ENCODE measurements at regions of chr18 and their contacts with region 1.

Region 1: DNA sequence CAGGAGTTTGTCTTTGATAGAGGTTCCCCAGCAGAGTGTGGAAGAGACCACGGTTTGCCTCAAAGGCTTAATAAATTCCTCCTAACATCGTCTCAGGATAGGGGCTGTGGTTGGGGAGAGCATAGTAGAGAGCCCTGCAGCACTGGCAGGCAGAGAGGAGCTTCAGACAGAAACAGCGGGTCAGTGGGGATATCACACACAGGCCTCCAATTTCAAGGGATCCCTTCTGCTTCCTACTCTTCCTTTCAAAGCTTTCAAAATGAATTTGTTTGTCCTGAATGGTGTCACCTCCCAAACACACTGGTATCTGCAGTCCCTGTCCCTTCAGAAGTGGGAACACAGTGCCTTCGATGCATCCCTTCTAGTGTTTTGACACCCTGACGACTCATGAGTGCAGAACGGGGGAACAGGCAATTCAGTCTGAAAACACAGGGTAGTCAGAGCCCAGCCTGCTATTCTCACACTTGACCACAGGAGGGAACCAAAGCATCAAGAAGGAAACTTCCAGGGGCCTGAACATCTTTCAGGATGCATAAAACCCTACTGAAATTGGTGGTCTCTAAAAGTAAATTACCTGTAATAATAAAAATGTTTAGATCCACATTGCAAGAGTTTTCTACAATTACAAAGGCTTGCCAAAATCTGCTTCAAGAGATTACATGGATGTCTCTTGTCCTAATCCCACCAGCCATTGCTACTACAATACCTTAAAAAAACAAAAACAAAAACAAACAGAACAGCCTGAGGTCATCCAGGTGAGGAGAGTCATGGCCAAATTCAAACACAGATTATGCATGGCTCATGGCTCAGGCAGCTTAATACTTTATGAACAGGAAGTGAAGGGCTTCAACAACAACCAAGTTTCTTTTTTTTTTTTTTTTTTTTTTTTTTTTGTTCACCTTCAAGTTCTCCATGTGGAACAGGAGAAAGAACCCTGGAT is 49.8 kb downstream of the SLC14A2 start:
- DNase-seq: peak in 1 of 2 donors; percentile 64
- ATAC-seq: peak; percentile 82
- H3K4me3 ChIP-seq: no peak overlapping the region
- H3K27ac ChIP-seq: no peak overlapping the region
- H3K4me1 ChIP-seq: no peaks in the 10 kb centered on the region
- H3K27me3 ChIP-seq: no peaks in the 10 kb centered on the region

Region 2: GRCh38 chr18:45621061-45621511 is 44.0 kb before region 1 on chr18:
- intact Hi-C with region 1: loop called (anchors 5 kb)
- DNase-seq: no peak
- ATAC-seq: no peak
- H3K4me3 ChIP-seq: no peak overlapping the region
- H3K27ac ChIP-seq: no peak overlapping the region
- H3K4me1 ChIP-seq: peaks cover 5 to 7% of the 10 kb centered on the region in 2 donors
- H3K27me3 ChIP-seq: no peaks in the 10 kb centered on the region

Region 3: GRCh38 chr18:45637546-45638327 is 27.4 kb before region 1 on chr18:
- intact Hi-C with region 1: loop called in 1 of 2 experiments (anchors 2 kb)
- DNase-seq: no peak
- ATAC-seq: peak; percentile 83
- H3K4me3 ChIP-seq: no peak overlapping the region
- H3K27ac ChIP-seq: peak overlapping the region; percentile 72 to 91
- H3K4me1 ChIP-seq: peaks cover 3 to 11% of the 10 kb centered on the region in 2 donors
- H3K27me3 ChIP-seq: no peaks in the 10 kb centered on the region

Region 4: DNA sequence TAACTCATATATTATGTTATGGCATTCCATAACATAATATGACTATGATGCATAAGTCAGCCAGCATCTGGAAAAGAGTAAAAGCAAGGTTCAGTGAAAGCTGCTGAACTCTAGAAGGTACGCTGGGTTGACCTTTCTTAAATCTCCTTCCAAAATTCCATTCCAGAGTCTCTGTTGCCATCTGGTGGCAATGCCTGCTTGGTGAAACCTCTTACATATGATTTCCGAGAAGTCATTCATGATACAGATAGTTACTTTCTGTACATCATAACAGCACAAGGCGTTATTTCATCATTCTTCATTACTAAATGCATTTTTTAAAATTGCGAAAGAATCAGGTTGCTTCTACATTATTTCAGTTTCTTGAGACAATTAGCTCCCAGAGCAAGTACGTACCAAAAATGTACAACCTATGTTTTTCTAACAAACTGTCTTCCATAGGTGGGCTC is 309.0 kb after region 1 on chr18:
- intact Hi-C with region 1: loop called in 1 of 2 experiments (anchors 2 kb)
- DNase-seq: peak in 1 of 2 donors; percentile 58
- ATAC-seq: peak; percentile 76
- H3K4me3 ChIP-seq: no peak overlapping the region
- H3K27ac ChIP-seq: no peak overlapping the region
- H3K4me1 ChIP-seq: no peaks in the 10 kb centered on the region
- H3K27me3 ChIP-seq: no peaks in the 10 kb centered on the region

Region 5: GRCh38 chr18:46073474-46074331 is 408.6 kb after region 1 on chr18:
- intact Hi-C with region 1: loop called (anchors 10 kb)
- DNase-seq: no peak
- ATAC-seq: peak; percentile 74
- H3K4me3 ChIP-seq: no peak overlapping the region
- H3K27ac ChIP-seq: no peak overlapping the region
- H3K4me1 ChIP-seq: no peaks in the 10 kb centered on the region
- H3K27me3 ChIP-seq: no peaks in the 10 kb centered on the region

Measured in aorta (tissue), 5 donors.